ENCODE measurements at regions of chr1 and their contacts with region 1.

Region 1: DNA sequence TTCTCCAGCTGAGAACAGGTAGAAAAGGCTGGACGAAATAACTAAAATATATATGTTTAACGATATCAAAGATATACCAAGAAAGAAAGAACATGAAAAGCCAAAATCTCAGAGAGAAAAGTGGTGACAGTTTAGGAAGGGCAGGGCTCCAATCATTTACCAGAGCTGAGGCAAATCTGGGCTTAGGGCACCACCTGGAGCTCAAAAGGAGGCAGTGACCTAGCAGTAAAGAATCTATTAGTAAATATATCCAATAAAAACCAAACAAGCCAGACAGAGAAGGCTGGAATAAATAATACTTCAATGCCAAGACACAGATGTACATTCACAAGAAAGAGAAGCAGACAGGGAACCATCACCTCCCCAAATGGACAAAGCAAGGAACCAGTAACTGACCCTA is 43.5 kb downstream of the CHIA start:
- DNase-seq: peak; percentile 58
- H3K4me3 Mint-ChIP-seq: no peak overlapping the region
- H3K27ac Mint-ChIP-seq: no peak overlapping the region
- H3K4me1 Mint-ChIP-seq: peaks cover 12% of the 10 kb centered on the region
- H3K27me3 Mint-ChIP-seq: peaks cover 2% of the 10 kb centered on the region

Region 2: GRCh38 chr1:111197598-111198284 is 136.4 kb before region 1 on chr1:
- CTCF ChIA-PET with region 1: interaction called, 33 read pairs
- POLR2A ChIA-PET with region 1: interaction called, 3 read pairs
- DNase-seq: peak; percentile 71
- H3K4me3 Mint-ChIP-seq: peak overlapping the region; percentile 96
- H3K27ac Mint-ChIP-seq: peak overlapping the region; percentile 93
- H3K4me1 Mint-ChIP-seq: peaks cover 77% of the 10 kb centered on the region
- H3K27me3 Mint-ChIP-seq: no peaks in the 10 kb centered on the region

Region 3: GRCh38 chr1:111227851-111228747 is 106.1 kb before region 1 on chr1:
- CTCF ChIA-PET with region 1: interaction called, 24 read pairs
- POLR2A ChIA-PET with region 1: no interaction called
- DNase-seq: no peak
- H3K4me3 Mint-ChIP-seq: no peak overlapping the region
- H3K27ac Mint-ChIP-seq: no peak overlapping the region
- H3K4me1 Mint-ChIP-seq: peaks cover 59% of the 10 kb centered on the region
- H3K27me3 Mint-ChIP-seq: no peaks in the 10 kb centered on the region

Region 4: DNA sequence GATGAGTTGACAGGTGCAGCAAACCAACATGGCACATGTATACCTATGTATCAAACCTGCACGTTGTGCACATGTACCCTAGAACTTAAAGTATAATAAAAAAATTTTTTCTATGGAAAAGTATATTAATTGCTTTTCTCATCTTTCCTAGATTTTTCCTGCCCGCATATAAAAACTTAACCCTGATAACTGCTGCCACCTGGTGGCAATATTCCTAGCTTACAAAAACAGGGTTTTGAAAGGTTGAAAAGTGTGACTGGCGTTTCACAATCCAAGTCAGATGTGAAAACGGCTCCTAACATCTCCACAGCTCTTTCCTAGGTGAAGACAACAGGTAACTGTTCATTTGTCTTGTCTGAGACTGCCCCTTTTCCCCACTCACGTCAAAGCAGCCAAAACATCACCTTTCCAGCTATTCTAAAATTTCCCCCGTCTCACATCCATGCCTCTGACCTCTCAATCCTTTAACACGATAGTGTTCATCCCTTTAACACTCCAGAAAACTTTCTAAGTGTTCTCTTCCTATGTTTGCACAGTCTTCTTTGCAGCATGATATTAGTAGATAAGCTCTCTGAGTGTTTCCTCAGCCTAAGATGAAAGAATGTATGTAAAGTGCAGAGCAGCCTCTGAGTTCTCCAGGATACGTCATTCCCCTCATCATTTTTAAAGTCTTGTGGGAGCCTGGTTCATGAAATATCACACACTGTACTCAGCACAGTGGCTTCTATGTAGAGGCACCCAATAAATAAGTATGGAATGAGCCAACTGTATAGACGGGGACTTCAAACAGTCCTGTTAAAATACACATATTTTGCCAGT is 65.8 kb after region 1 on chr1:
- CTCF ChIA-PET with region 1: interaction called, 10 read pairs
- POLR2A ChIA-PET with region 1: no interaction called
- DNase-seq: peak; percentile 45
- H3K4me3 Mint-ChIP-seq: no peak overlapping the region
- H3K27ac Mint-ChIP-seq: no peak overlapping the region
- H3K4me1 Mint-ChIP-seq: peaks cover 8% of the 10 kb centered on the region
- H3K27me3 Mint-ChIP-seq: peaks cover 43% of the 10 kb centered on the region

Region 5: GRCh38 chr1:111747282-111747734 is 413.1 kb after region 1 on chr1:
- CTCF ChIA-PET with region 1: no interaction called
- POLR2A ChIA-PET with region 1: no interaction called
- DNase-seq: peak; percentile 79
- H3K4me3 Mint-ChIP-seq: no peak overlapping the region
- H3K27ac Mint-ChIP-seq: no peak overlapping the region
- H3K4me1 Mint-ChIP-seq: peaks cover 12% of the 10 kb centered on the region
- H3K27me3 Mint-ChIP-seq: peaks cover 20% of the 10 kb centered on the region

Region 6: DNA sequence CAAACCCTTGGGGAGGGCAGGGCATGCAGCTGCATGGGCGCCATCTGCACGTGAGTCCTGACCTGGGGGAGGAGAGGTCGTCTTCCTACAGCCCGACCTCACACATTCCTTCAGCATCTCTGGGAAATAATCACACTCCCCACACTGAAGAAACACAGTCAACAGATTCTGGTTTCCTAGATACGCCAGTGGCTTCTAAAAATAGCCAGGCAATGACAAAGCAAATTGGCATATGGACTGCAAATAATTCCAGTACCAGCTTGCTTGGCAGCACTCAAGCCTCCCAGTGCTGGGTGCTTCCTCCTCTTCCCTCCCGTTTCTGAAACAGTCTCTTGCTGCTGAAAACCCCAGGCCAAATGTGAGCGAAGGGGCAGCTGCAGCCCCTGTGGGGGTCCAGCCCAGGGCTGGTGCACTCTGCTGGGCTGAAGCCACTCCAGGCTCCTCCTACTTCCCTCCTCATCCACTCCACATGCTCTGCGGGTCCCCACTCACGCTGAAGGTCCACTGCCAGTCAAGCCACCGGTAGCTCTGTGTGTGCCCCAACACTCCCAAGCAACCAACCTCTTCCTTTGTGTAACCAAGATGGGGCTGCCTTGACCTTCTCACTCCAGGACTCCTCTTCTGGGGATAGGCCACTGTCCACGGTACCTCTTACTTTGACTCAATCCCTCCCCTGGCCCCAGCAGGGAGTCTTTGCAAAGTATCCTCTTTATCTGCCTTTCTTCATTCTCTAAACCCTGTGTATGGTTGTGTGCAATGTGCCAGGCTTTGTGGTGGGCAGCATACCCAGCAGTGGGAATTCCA is 586.3 kb after region 1 on chr1:
- CTCF ChIA-PET with region 1: no interaction called
- POLR2A ChIA-PET with region 1: no interaction called
- DNase-seq: no peak
- H3K4me3 Mint-ChIP-seq: no peak overlapping the region
- H3K27ac Mint-ChIP-seq: no peak overlapping the region
- H3K4me1 Mint-ChIP-seq: no peaks in the 10 kb centered on the region
- H3K27me3 Mint-ChIP-seq: peaks cover 51% of the 10 kb centered on the region